Ascending aorta (tissue), 2 donors: ENCODE measurements at regions of chr14 and their contacts with region 1.

Region 1: GRCh38 chr14:32724867-32725471 is 213.7 kb upstream of the NPAS3 start:
- DNase-seq: no peak
- H3K4me3 ChIP-seq: peak overlapping the region in 1 of 2 donors; percentile 50
- H3K27ac ChIP-seq: peak overlapping the region in 1 of 2 donors; percentile 60
- H3K4me1 ChIP-seq: peaks cover 0 to 8% of the 10 kb centered on the region in 2 donors
- H3K27me3 ChIP-seq: no peaks in the 10 kb centered on the region
- CTCF ChIP-seq: no peak

Region 2: GRCh38 chr14:32761381-32761968 is 36.5 kb after region 1 on chr14:
- intact Hi-C with region 1: loop called (anchors 5 kb)
- DNase-seq: no peak
- H3K4me3 ChIP-seq: peak overlapping the region in 1 of 2 donors; percentile 6
- H3K27ac ChIP-seq: peak overlapping the region; percentile 61 to 62
- H3K4me1 ChIP-seq: peaks cover 3 to 25% of the 10 kb centered on the region in 2 donors
- H3K27me3 ChIP-seq: no peaks in the 10 kb centered on the region
- CTCF ChIP-seq: no peak

Region 3: DNA sequence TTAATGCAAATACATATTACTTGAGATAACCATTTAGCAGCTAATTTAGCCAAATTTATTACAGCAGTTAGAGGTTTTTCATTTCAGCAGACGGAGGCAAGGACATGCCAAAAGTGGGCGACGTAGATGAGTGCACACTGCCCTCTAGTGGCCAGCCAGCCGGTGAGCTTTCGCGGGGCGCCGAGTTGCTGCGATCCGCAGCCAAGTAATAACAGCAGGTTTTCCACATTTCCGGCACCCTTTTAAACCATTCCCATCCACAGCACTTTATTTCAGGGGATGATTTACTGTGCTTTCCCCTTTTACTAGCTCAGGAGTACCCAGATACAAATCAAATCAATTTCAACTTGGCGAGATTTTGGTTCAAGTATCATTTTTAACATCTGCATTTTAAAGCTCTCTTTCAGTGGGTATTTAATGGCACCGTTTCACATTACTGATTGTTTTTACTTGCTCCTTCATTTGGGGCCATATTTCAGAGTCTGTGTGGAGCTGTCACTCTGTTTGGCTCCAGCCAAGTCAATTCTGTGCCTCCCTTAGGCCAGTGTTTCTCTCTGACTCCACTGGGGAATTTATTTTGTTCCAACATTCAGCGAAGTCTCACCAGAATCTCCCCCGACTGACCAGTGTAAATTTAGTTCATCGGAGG is 1067.9 kb after region 1 on chr14:
- intact Hi-C with region 1: loop called (anchors 10 kb)
- DNase-seq: peak in 1 of 2 donors; percentile 81
- H3K4me3 ChIP-seq: peak overlapping the region; percentile 29 to 54
- H3K27ac ChIP-seq: peak overlapping the region; percentile 44
- H3K4me1 ChIP-seq: no peaks in the 10 kb centered on the region
- H3K27me3 ChIP-seq: no peaks in the 10 kb centered on the region
- CTCF ChIP-seq: peak; percentile 74 to 94 (median 94)